T-cell (primary cell): ENCODE measurements at regions of chr12 and their contacts with region 1.

Region 1: GRCh38 chr12:121793838-121794533 is 498 bp upstream of the RHOF start:
- DNase-seq: peak; percentile 89 to 98 (median 94)
- ATAC-seq: peak; percentile 56 to 62 (median 59)
- H3K4me3 ChIP-seq: peak overlapping the region; percentile 95 to 98
- H3K4me3 Mint-ChIP-seq: peak overlapping the region; percentile 79 to 94 (median 94)
- H3K27ac ChIP-seq: peak overlapping the region; percentile 97
- H3K27ac Mint-ChIP-seq: peak overlapping the region; percentile 89 to 92
- H3K4me1 ChIP-seq: peaks cover 30 to 90% of the 10 kb centered on the region in 2 experiments
- H3K4me1 Mint-ChIP-seq: peaks cover 67 to 74% (median 71%) of the 10 kb centered on the region in 3 donors
- H3K27me3 ChIP-seq: no peaks in the 10 kb centered on the region
- H3K27me3 Mint-ChIP-seq: no peaks in the 10 kb centered on the region

Region 2: DNA sequence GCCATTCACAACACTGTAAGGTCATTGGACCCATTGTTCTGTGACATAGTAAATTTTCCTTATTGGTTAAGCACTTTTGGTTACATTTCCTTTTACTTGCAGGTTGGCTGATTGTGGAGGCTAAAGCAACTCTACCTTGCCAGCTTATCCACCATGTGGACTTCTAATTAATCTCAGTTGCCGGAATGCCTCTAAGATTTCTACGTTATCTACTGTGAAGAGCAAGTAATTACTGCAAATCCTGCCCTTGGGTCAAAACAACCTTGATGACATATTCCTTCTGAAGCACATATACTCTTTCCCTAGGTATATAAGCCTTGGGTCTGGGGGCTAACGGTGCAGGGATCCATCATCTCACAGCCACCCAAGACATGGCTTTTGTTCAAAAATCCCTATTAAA is 105.0 kb before region 1 on chr12:
- CTCF ChIA-PET with region 1: interaction called, 3 to 11 read pairs
- POLR2A ChIA-PET with region 1: interaction called in 1 of 2 experiments, 3 read pairs
- DNase-seq: no peak
- ATAC-seq: no peak
- H3K4me3 ChIP-seq: no peak overlapping the region
- H3K4me3 Mint-ChIP-seq: no peak overlapping the region
- H3K27ac ChIP-seq: no peak overlapping the region
- H3K27ac Mint-ChIP-seq: peak overlapping the region in 1 of 2 donors; percentile 28
- H3K4me1 ChIP-seq: peaks cover 4 to 16% of the 10 kb centered on the region in 2 experiments
- H3K4me1 Mint-ChIP-seq: peaks cover 7 to 12% (median 9%) of the 10 kb centered on the region in 3 donors
- H3K27me3 ChIP-seq: peaks cover 0 to 2% of the 10 kb centered on the region in 2 experiments
- H3K27me3 Mint-ChIP-seq: no peaks in the 10 kb centered on the region

Region 3: GRCh38 chr12:121773011-121773777 is 20.8 kb before region 1 on chr12:
- CTCF ChIA-PET with region 1: interaction called, 13 to 24 read pairs
- POLR2A ChIA-PET with region 1: no interaction called
- DNase-seq: peak; percentile 48 to 88 (median 74)
- ATAC-seq: peak; percentile 70 to 87 (median 81)
- H3K4me3 ChIP-seq: no peak overlapping the region
- H3K4me3 Mint-ChIP-seq: no peak overlapping the region
- H3K27ac ChIP-seq: peak overlapping the region; percentile 47
- H3K27ac Mint-ChIP-seq: peak overlapping the region; percentile 31 to 66
- H3K4me1 ChIP-seq: peaks cover 0 to 29% of the 10 kb centered on the region in 2 experiments
- H3K4me1 Mint-ChIP-seq: peaks cover 8 to 15% (median 10%) of the 10 kb centered on the region in 3 donors
- H3K27me3 ChIP-seq: no peaks in the 10 kb centered on the region
- H3K27me3 Mint-ChIP-seq: no peaks in the 10 kb centered on the region

Region 4: GRCh38 chr12:121781998-121782979 is 11.7 kb before region 1 on chr12:
- CTCF ChIA-PET with region 1: interaction called, 7 to 45 read pairs
- POLR2A ChIA-PET with region 1: interaction called, 5 to 7 read pairs
- DNase-seq: peak in 13 of 35 experiments; percentile 17 to 63 (median 48)
- ATAC-seq: peak; percentile 35 to 70 (median 68)
- H3K4me3 ChIP-seq: peak overlapping the region in 1 of 2 donors; percentile 19
- H3K4me3 Mint-ChIP-seq: peak overlapping the region; percentile 56 to 94 (median 64)
- H3K27ac ChIP-seq: peak overlapping the region; percentile 68
- H3K27ac Mint-ChIP-seq: peak overlapping the region; percentile 95 to 96
- H3K4me1 ChIP-seq: peaks cover 26 to 79% of the 10 kb centered on the region in 2 experiments
- H3K4me1 Mint-ChIP-seq: peaks cover 59 to 72% (median 68%) of the 10 kb centered on the region in 3 donors
- H3K27me3 ChIP-seq: no peaks in the 10 kb centered on the region
- H3K27me3 Mint-ChIP-seq: no peaks in the 10 kb centered on the region

Region 5: DNA sequence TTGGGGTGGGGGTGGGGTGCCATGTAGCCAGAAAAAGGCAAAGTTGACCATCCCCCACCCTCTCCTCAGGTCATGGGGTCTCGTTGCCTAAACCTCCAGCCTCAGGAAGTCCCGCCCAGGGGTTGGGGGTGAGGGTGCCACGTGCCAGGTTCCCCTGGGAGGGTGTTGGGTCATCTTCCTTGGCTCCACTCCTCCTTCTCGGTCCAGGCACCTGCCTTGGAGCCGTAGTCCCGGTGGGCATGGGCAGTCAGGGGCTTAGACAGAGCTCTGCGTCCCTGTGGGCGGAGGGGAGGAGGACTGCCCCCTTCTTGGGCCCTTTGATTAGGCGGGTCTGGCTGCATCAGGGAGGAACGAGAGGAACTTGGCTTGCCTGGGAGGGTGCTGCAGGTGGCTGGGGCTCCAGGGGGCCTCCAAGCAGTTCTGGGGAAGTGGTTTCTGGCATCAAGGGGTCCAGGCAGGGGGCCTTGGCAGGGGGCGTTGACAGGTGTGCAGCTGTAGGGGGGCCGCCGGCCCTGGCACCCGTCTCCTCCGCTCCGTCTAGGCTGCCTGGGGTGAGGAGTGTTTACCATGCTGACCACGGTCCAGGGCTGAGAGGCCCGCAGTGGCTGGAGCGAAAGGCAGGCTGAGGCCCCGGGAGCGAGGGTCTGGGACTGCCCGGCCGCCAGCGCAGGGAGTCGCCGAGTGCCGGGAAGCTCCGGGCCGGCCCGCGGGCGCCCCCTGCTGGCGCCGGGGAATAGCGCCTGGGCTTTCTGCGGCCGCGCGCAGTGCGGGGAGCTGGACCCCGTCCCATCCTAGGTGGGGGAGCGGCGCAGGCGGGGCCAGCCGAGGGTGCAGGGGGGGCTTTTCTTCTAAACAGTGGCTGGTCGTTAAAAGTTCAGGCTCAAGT is 17.7 kb after region 1 on chr12:
- CTCF ChIA-PET with region 1: interaction called, 92 to 344 read pairs
- POLR2A ChIA-PET with region 1: interaction called, 17 to 22 read pairs
- DNase-seq: peak in 27 of 35 experiments; percentile 46 to 81 (median 63)
- ATAC-seq: peak; percentile 73 to 83 (median 78)
- H3K4me3 ChIP-seq: peak overlapping the region; percentile 62 to 63
- H3K4me3 Mint-ChIP-seq: peak overlapping the region; percentile 80 to 90 (median 81)
- H3K27ac ChIP-seq: peak overlapping the region; percentile 31
- H3K27ac Mint-ChIP-seq: peak overlapping the region; percentile 70 to 86
- H3K4me1 ChIP-seq: peaks cover 19 to 74% of the 10 kb centered on the region in 2 experiments
- H3K4me1 Mint-ChIP-seq: peaks cover 45 to 73% (median 55%) of the 10 kb centered on the region in 3 donors
- H3K27me3 ChIP-seq: no peaks in the 10 kb centered on the region
- H3K27me3 Mint-ChIP-seq: no peaks in the 10 kb centered on the region

Region 6: DNA sequence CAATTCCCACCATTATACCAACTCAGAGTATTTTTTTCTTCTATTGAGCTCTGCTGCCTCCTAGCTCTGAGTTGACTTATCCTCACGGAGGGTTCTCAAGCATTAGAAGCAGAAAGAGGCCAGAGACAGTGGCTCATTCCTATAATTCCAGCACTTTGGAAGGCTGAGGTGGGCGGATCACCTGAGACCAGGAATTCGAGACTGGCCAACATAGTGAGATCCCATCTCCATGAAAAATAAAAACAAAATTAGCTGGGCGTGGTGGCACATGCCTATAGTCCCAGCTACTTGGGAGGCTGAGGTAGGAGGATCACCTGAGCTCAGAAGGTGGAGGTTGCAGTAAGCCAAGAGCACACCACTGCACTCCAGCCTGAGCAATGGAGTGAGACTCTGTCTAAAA is 43.7 kb after region 1 on chr12:
- CTCF ChIA-PET with region 1: interaction called, 3 to 4 read pairs
- POLR2A ChIA-PET with region 1: interaction called in 1 of 2 experiments, 13 read pairs
- DNase-seq: no peak
- ATAC-seq: no peak
- H3K4me3 ChIP-seq: no peak overlapping the region
- H3K4me3 Mint-ChIP-seq: no peak overlapping the region
- H3K27ac ChIP-seq: no peak overlapping the region
- H3K27ac Mint-ChIP-seq: peak overlapping the region in 1 of 2 donors; percentile 34
- H3K4me1 ChIP-seq: peaks cover 6 to 17% of the 10 kb centered on the region in 2 experiments
- H3K4me1 Mint-ChIP-seq: peaks cover 12 to 18% (median 14%) of the 10 kb centered on the region in 3 donors
- H3K27me3 ChIP-seq: no peaks in the 10 kb centered on the region
- H3K27me3 Mint-ChIP-seq: no peaks in the 10 kb centered on the region

Region 7: GRCh38 chr12:121888478-121889266 is 94.7 kb after region 1 on chr12 and contains the start of gene PSMD9:
- CTCF ChIA-PET with region 1: interaction called, 6 to 10 read pairs
- POLR2A ChIA-PET with region 1: interaction called in 1 of 2 experiments, 6 read pairs
- DNase-seq: peak; percentile 94 to 99 (median 97)
- ATAC-seq: peak; percentile 93 to 97 (median 96)
- H3K4me3 ChIP-seq: peak within 1 kb of the TSS; percentile 69 to 73
- H3K4me3 Mint-ChIP-seq: peak within 1 kb of the TSS; percentile 95 to 99 (median 99)
- H3K27ac ChIP-seq: peak within 1 kb of the TSS; percentile 85
- H3K27ac Mint-ChIP-seq: peak within 1 kb of the TSS; percentile 99
- H3K4me1 ChIP-seq: peaks cover 9 to 32% of the 10 kb centered on the region in 2 experiments
- H3K4me1 Mint-ChIP-seq: peaks cover 37 to 45% (median 38%) of the 10 kb centered on the region in 3 donors
- H3K27me3 ChIP-seq: no peaks in the 10 kb centered on the region
- H3K27me3 Mint-ChIP-seq: peaks cover 0 to 2% of the 10 kb centered on the region in 2 donors
- total RNA-seq, gene PSMD9: 42.1 to 57.3 (median 48.1) TPM